ENCODE measurements at regions of chr1 and their contacts with region 1.

Region 1: GRCh38 chr1:193979219-193979618 is 792.8 kb upstream of the B3GALT2 start:
- DNase-seq: no peak
- H3K4me3 ChIP-seq: no peak overlapping the region
- H3K27ac ChIP-seq: no peak overlapping the region
- H3K4me1 ChIP-seq: no peaks in the 10 kb centered on the region
- H3K27me3 ChIP-seq: no peaks in the 10 kb centered on the region
- CTCF ChIP-seq: no peak

Region 2: GRCh38 chr1:193614817-193615216 is 364.4 kb before region 1 on chr1:
- CTCF ChIA-PET with region 1: no interaction called
- POLR2A ChIA-PET with region 1: interaction called, 10 read pairs
- intact Hi-C with region 1: no loop called
- DNase-seq: no peak
- H3K4me3 ChIP-seq: no peak overlapping the region
- H3K27ac ChIP-seq: no peak overlapping the region
- H3K4me1 ChIP-seq: no peaks in the 10 kb centered on the region
- H3K27me3 ChIP-seq: no peaks in the 10 kb centered on the region
- CTCF ChIP-seq: no peak